ENCODE measurements at regions of chr19 and their contacts with region 1.

Region 1: GRCh38 chr19:39328046-39328705 is 7.5 kb upstream of the LRFN1 start:
- DNase-seq: peak in 1 of 2 donors; percentile 90
- H3K4me3 ChIP-seq: no peak overlapping the region
- H3K27ac ChIP-seq: no peak overlapping the region
- H3K4me1 ChIP-seq: no peaks in the 10 kb centered on the region
- H3K27me3 ChIP-seq: no peaks in the 10 kb centered on the region
- CTCF ChIP-seq: peak; percentile 92 to 98 (median 96)

Region 2: GRCh38 chr19:38964738-38965137 is 363.4 kb before region 1 on chr19:
- intact Hi-C with region 1: loop called (anchors 5 kb)
- DNase-seq: no peak
- H3K4me3 ChIP-seq: no peak overlapping the region
- H3K27ac ChIP-seq: no peak overlapping the region
- H3K4me1 ChIP-seq: no peaks in the 10 kb centered on the region
- H3K27me3 ChIP-seq: no peaks in the 10 kb centered on the region
- CTCF ChIP-seq: no peak

Region 3: DNA sequence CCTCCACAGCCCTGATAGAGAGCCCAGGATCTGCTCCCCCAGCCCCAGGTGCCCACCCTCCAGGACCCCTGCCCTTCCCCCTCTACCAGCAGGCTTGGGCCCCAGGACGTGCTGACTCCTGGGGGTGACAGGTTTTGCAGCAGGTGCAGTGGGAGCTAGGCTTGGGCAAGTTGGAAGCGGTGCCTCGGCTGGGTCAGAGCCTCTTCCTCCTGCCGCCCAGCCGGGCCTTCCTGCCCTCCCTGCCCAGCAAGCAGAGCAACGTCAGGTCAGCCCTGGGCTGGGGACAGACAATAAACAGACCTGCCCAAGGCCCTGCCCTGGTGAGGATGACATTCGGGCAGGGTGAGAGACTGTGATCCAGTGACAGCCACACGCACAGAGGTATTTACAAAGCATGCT is 140.6 kb before region 1 on chr19:
- intact Hi-C with region 1: loop called (anchors 10 kb)
- DNase-seq: no peak
- H3K4me3 ChIP-seq: no peak overlapping the region
- H3K27ac ChIP-seq: no peak overlapping the region
- H3K4me1 ChIP-seq: no peaks in the 10 kb centered on the region
- H3K27me3 ChIP-seq: no peaks in the 10 kb centered on the region
- CTCF ChIP-seq: no peak

Region 4: GRCh38 chr19:39372047-39372802 is 44.0 kb after region 1 on chr19:
- intact Hi-C with region 1: no loop called
- DNase-seq: peak; percentile 41 to 93
- H3K4me3 ChIP-seq: peak overlapping the region; percentile 20 to 33
- H3K27ac ChIP-seq: peak overlapping the region; percentile 96
- H3K4me1 ChIP-seq: peaks cover 15 to 24% of the 10 kb centered on the region in 2 donors
- H3K27me3 ChIP-seq: no peaks in the 10 kb centered on the region
- CTCF ChIP-seq: no peak